Right cardiac atrium (tissue), 5 donors: ENCODE measurements at regions of chr1 and their contacts with region 1.

Region 1: GRCh38 chr1:206583707-206584648 is 28.3 kb downstream of the EIF2D start:
- DNase-seq: peak; percentile 77 to 91 (median 87)
- ATAC-seq: peak; percentile 64 to 66
- H3K4me3 ChIP-seq: no peak overlapping the region
- H3K27ac ChIP-seq: no peak overlapping the region
- H3K4me1 ChIP-seq: no peaks in the 10 kb centered on the region
- H3K27me3 ChIP-seq: no peaks in the 10 kb centered on the region

Region 2: GRCh38 chr1:206461602-206462455 is 122.1 kb before region 1 on chr1:
- intact Hi-C with region 1: no loop called
- DNase-seq: peak in 2 of 3 donors; percentile 51 to 73
- ATAC-seq: peak; percentile 57
- H3K4me3 ChIP-seq: no peak overlapping the region
- H3K27ac ChIP-seq: no peak overlapping the region
- H3K4me1 ChIP-seq: peaks cover 5% of the 10 kb centered on the region
- H3K27me3 ChIP-seq: no peaks in the 10 kb centered on the region

Region 3: GRCh38 chr1:206479183-206480125 is 104.5 kb before region 1 on chr1:
- intact Hi-C with region 1: loop called in 1 of 4 experiments (anchors 5 kb)
- DNase-seq: peak; percentile 79 to 89 (median 81)
- ATAC-seq: peak; percentile 44 to 61
- H3K4me3 ChIP-seq: no peak overlapping the region
- H3K27ac ChIP-seq: no peak overlapping the region
- H3K4me1 ChIP-seq: no peaks in the 10 kb centered on the region
- H3K27me3 ChIP-seq: no peaks in the 10 kb centered on the region

Region 4: DNA sequence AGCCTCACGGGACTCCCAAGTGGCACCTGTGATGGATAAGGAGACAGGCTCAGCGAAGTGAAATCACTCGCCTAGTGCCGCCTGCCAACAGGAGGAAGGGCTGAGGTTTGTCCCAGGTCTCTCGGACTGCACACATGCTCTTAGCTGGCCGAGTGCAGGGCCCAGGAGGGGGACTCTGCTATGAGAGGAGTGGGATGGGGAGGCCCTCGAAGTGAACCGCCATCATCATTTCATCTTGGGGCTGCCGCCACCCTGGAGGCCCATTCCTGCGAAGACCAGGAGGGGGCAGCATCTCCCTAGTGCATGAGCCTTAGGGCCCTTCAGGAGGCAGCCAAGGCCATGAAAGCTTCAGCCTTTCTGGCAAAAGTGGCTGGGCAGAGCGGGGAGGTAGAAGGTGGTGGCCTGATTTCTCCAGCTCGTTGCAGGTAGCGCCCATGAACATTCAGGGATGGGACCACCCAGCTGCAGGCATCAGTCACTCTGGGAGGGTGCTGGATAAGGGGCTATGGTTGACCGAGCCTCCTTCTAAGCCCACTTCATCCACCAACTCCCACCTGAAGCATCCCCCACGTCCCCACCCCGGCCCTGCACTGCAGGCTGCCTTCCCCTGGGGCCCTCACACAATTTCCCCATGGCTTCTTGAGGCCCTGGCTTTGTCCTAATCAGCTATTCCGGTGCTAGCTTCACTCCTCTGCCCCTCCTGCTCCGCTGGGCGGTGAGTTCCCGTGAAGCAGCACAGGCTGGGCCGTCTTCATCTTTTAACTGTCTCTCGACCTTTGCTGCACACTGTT is 93.8 kb before region 1 on chr1:
- intact Hi-C with region 1: loop called (anchors 2 to 5 kb)
- DNase-seq: peak; percentile 76 to 93 (median 90)
- ATAC-seq: peak; percentile 81 to 82
- H3K4me3 ChIP-seq: no peak overlapping the region
- H3K27ac ChIP-seq: no peak overlapping the region
- H3K4me1 ChIP-seq: peaks cover 3% of the 10 kb centered on the region
- H3K27me3 ChIP-seq: no peaks in the 10 kb centered on the region

Region 5: GRCh38 chr1:206544562-206545257 is 39.3 kb before region 1 on chr1:
- intact Hi-C with region 1: loop called (anchors 2 to 5 kb)
- DNase-seq: peak; percentile 68 to 89 (median 87)
- ATAC-seq: peak; percentile 46 to 69
- H3K4me3 ChIP-seq: no peak overlapping the region
- H3K27ac ChIP-seq: no peak overlapping the region
- H3K4me1 ChIP-seq: peaks cover 5% of the 10 kb centered on the region
- H3K27me3 ChIP-seq: no peaks in the 10 kb centered on the region